ENCODE measurements at regions of chr5 and their contacts with region 1.

Region 1: GRCh38 chr5:87791869-87792268 is 379.1 kb upstream of the CCNH start:
- DNase-seq: no peak
- H3K4me3 ChIP-seq: no peak overlapping the region
- CTCF ChIP-seq: no peak
- POLR2A ChIP-seq: no peak

Region 2: DNA sequence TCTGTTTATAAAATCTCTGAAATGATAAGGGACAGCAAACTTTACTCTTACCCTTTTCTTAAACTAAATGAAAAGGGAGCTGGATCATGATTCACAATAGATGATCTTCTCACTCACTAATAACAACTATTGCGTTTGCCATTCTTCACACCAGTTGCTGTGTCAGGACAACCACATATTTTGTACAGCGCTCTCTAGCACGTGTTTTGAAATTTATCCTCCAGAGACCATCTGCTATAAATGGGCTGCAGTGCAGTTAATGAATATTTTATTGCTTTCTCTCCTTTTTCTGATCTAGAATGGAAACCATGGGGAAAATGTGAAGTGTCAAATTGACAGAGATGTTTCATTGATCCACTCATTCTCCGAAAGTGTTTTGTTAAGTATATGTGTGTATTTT is 120.7 kb before region 1 on chr5:
- intact Hi-C with region 1: no loop called
- DNase-seq: no peak
- H3K4me3 ChIP-seq: no peak overlapping the region
- CTCF ChIP-seq: no peak
- POLR2A ChIP-seq: no peak

Region 3: GRCh38 chr5:87770601-87771121 is 21.2 kb before region 1 on chr5:
- intact Hi-C with region 1: loop called (anchors 2 kb)
- DNase-seq: no peak
- H3K4me3 ChIP-seq: no peak overlapping the region
- CTCF ChIP-seq: no peak
- POLR2A ChIP-seq: no peak

Region 4: DNA sequence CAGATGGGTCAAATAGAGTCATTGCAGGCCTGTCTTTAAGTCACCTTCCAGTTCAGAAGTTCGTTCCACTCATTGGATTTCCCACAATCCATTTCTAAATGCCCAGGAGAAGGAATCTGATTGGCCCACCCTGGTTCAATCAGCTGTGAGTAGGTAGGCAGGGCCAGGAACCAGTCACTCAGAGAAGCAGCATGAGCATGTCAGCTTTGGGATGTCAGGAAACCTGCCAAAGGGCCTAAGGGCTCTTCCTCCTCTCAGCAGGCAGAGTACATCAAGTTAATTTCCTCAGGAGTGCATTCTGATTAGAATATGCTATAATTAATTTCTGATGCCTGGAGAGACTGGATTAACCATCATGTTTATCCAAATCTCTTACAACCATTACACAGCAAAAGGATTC is 33.7 kb after region 1 on chr5:
- intact Hi-C with region 1: no loop called
- DNase-seq: no peak
- H3K4me3 ChIP-seq: no peak overlapping the region
- CTCF ChIP-seq: no peak
- POLR2A ChIP-seq: no peak